H1 (cell line): ENCODE measurements at regions of chr18 and their contacts with region 1.

Region 1: GRCh38 chr18:48445540-48445939 is 36.4 kb upstream of the ZBTB7C start:
- DNase-seq: peak; percentile 31 to 92
- H3K4me3 ChIP-seq: no peak overlapping the region
- H3K27ac ChIP-seq: no peak overlapping the region
- H3K4me1 ChIP-seq: peaks cover 0 to 2% (median 2%) of the 10 kb centered on the region in 4 experiments; a peak in 2 of 7 replicates
- H3K27me3 ChIP-seq: no peaks in the 10 kb centered on the region; a peak in 1 of 7 replicates
- CTCF ChIP-seq: peak; percentile 88 to 98 (median 94)
- EP300 ChIP-seq: no peak
- POLR2A ChIP-seq: no peak
- RAD21 ChIP-seq: peak; percentile 72 to 79

Region 2: GRCh38 chr18:48030616-48031480 is 414.7 kb before region 1 on chr18:
- CTCF ChIA-PET with region 1: interaction called, 52 read pairs
- POLR2A ChIA-PET with region 1: no interaction called
- DNase-seq: peak; percentile 9 to 52
- H3K4me3 ChIP-seq: no peak overlapping the region
- H3K27ac ChIP-seq: no peak overlapping the region
- H3K4me1 ChIP-seq: peaks cover 0 to 2% (median under 1%) of the 10 kb centered on the region in 4 experiments; a peak in 2 of 7 replicates
- H3K27me3 ChIP-seq: no peaks in the 10 kb centered on the region; a peak in 1 of 7 replicates
- CTCF ChIP-seq: peak; percentile 68 to 93 (median 85)
- EP300 ChIP-seq: no peak
- POLR2A ChIP-seq: no peak
- RAD21 ChIP-seq: peak; percentile 85 to 89

Region 3: DNA sequence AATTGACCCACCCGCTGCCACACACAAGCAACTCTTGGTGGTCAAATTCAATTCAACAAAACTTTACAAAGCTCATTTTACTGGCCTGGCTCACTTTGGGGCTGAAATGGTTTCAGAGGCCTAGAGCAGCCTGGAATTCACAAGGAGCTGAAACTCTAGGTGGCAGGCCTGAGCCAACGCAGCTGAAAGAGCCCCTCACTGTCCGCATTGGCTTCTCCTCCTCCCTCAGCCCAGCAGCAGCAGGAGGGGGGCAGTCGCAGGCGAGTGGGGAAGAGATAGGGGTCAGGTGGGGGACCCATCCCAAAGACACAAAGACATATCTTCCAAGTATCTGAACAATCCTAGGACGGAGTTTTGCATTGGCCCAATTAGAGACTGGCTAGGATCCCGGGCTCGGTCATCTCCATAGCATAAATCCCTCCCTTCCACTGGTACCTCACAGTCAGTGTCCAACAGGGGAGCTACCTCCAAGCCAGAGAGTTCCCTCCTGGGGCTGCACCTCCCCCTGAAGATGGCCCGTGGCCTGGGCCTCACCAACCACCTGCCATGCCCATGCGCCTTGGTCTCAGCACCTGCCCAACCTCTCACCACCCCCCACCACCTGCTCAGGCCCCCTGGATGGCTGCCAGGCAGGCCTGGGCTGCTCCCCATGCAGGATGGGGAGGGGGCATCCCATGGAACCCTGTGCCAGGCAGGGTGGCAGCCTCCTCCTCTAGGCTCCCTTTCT is 149.8 kb before region 1 on chr18:
- CTCF ChIA-PET with region 1: interaction called, 23 read pairs
- POLR2A ChIA-PET with region 1: no interaction called
- DNase-seq: peak in 1 of 2 experiments; percentile 64
- H3K4me3 ChIP-seq: no peak overlapping the region
- H3K27ac ChIP-seq: no peak overlapping the region
- H3K4me1 ChIP-seq: peaks cover 0 to 11% (median 6%) of the 10 kb centered on the region in 4 experiments; a peak in 5 of 7 replicates
- H3K27me3 ChIP-seq: no peaks in the 10 kb centered on the region
- CTCF ChIP-seq: peak; percentile 70 to 80 (median 76)
- EP300 ChIP-seq: no peak
- POLR2A ChIP-seq: no peak
- RAD21 ChIP-seq: peak; percentile 67 to 75

Region 4: GRCh38 chr18:48410095-48410920 is 35.2 kb before region 1 on chr18:
- CTCF ChIA-PET with region 1: interaction called, 10 read pairs
- POLR2A ChIA-PET with region 1: no interaction called
- DNase-seq: peak; percentile 57 to 94
- H3K4me3 ChIP-seq: peak overlapping the region; percentile 56 to 78 (median 64)
- H3K27ac ChIP-seq: no peak overlapping the region
- H3K4me1 ChIP-seq: peaks cover 2 to 16% (median 10%) of the 10 kb centered on the region in 4 experiments
- H3K27me3 ChIP-seq: peaks cover 21 to 56% (median 47%) of the 10 kb centered on the region in 4 experiments
- CTCF ChIP-seq: peak in 1 of 3 experiments; percentile 17; a peak in 1 of 4 replicates
- EP300 ChIP-seq: no peak
- POLR2A ChIP-seq: no peak
- RAD21 ChIP-seq: peak in 1 of 2 experiments; percentile 19; a peak in 2 of 4 replicates

Region 5: DNA sequence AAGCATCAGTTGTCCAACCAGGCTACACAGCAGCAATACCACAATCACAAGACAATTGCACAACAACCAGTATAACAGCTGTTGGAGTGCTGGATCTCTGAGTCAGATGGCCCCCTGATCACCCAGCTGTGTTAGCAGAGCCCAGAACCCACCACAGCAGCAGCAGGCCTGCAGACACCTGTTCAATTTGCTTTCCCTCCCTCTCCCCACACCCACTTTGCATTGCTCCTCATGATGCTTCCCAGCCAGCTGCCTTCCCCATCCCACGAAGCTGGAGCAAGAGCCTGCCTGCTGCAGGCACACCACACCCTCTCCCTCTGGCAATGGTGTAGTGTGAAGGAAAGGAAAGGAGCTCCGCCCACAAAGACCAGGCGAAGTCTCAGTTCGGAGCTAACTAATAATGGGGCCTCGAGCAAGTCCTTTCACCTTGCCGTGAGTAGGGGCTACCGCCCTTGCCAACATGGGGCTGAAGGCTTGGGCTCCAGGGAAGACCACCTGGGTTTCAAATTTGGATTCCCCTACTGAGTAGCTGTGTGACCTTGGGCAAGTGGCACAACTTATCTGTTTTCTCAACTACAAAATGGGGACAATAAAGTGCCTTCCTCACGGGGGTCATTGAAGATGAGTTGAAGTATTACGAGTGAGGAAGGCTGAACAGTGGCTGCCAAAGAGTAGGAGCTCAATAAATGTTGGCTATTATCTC is 16.9 kb before region 1 on chr18:
- CTCF ChIA-PET with region 1: interaction called, 25 read pairs
- POLR2A ChIA-PET with region 1: interaction called, 3 read pairs
- DNase-seq: no peak
- H3K4me3 ChIP-seq: no peak overlapping the region
- H3K27ac ChIP-seq: no peak overlapping the region
- H3K4me1 ChIP-seq: 0 out of 7 replicates have a peak, but pooled peaks cover 0 to 2% (median 0%) of the 10 kb centered on the region in 4 experiments
- H3K27me3 ChIP-seq: peaks cover 0 to 15% (median 3%) of the 10 kb centered on the region in 4 experiments; a peak in 4 of 7 replicates
- CTCF ChIP-seq: no peak
- EP300 ChIP-seq: no peak
- POLR2A ChIP-seq: no peak
- RAD21 ChIP-seq: no peak

Region 6: GRCh38 chr18:48460929-48461583 is 15.5 kb after region 1 on chr18:
- CTCF ChIA-PET with region 1: interaction called, 57 read pairs
- POLR2A ChIA-PET with region 1: interaction called, 3 read pairs
- DNase-seq: no peak
- H3K4me3 ChIP-seq: no peak overlapping the region
- H3K27ac ChIP-seq: no peak overlapping the region
- H3K4me1 ChIP-seq: no peaks in the 10 kb centered on the region
- H3K27me3 ChIP-seq: no peaks in the 10 kb centered on the region
- CTCF ChIP-seq: no peak
- EP300 ChIP-seq: no peak
- POLR2A ChIP-seq: no peak
- RAD21 ChIP-seq: no peak

Region 7: GRCh38 chr18:48529796-48530195 is 84.3 kb after region 1 on chr18:
- CTCF ChIA-PET with region 1: no interaction called
- POLR2A ChIA-PET with region 1: no interaction called
- DNase-seq: no peak
- H3K4me3 ChIP-seq: no peak overlapping the region
- H3K27ac ChIP-seq: no peak overlapping the region
- H3K4me1 ChIP-seq: peaks cover 0 to 4% (median 2%) of the 10 kb centered on the region in 4 experiments; a peak in 1 of 7 replicates
- H3K27me3 ChIP-seq: no peaks in the 10 kb centered on the region
- CTCF ChIP-seq: no peak
- EP300 ChIP-seq: no peak
- POLR2A ChIP-seq: no peak
- RAD21 ChIP-seq: no peak